Activated B cell treated with CpG ODN at 0.5 μM for 24 hours (primary cell): ENCODE measurements at regions of chr20 and their contacts with region 1.

Region 1: GRCh38 chr20:53738039-53738944 is 144.7 kb upstream of the ZNF217 start:
- DNase-seq: no peak
- ATAC-seq: no peak
- H3K4me3 Mint-ChIP-seq: peak overlapping the region; percentile 74
- H3K27ac Mint-ChIP-seq: peak overlapping the region; percentile 97
- H3K4me1 Mint-ChIP-seq: peaks cover 78% of the 10 kb centered on the region
- H3K27me3 Mint-ChIP-seq: no peaks in the 10 kb centered on the region
- CTCF ChIP-seq: no peak

Region 2: DNA sequence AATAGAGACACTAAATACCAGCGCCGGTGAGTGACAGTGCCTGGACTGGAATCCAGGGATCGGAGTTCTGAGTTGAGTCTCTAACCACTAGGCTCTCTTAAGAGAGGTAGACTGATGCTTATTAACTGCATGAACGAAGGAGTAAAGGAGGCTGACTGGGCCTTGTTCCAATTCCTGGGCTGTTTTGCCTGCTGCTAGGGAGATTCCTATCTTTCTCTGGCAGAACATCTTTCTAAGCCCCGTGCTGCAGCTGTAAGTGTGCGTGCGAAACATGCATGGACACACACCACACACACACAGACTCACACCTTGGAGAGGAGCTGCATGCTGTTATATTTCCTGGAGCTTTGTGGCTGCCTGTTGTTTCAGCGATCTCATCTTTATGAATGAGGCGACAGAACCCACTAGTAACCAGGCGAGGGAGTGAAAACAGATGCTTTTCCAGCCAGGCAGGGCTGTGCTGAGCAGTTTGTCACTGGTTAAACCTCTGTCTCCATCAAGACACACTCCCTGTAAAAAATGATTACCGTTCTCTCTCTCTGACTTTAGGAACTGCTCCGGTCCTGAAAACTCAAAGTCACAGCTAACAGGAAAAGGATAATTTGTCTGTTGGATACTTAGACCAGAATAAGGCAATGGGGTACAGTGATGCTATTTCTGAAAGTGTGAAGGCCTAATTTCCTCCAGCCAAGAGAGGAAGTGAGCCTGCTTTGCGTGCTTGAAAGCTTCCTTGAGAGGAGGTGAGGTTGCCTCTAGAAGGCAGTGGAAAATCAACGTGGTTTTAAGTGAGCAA is 12.7 kb after region 1 on chr20:
- CTCF ChIA-PET with region 1: interaction called, 5 read pairs
- POLR2A ChIA-PET with region 1: interaction called, 20 read pairs
- intact Hi-C with region 1: loop called (anchors 1 kb)
- DNase-seq: no peak
- ATAC-seq: peak; percentile 87
- H3K4me3 Mint-ChIP-seq: peak overlapping the region; percentile 45
- H3K27ac Mint-ChIP-seq: peak overlapping the region; percentile 95
- H3K4me1 Mint-ChIP-seq: peaks cover 64% of the 10 kb centered on the region
- H3K27me3 Mint-ChIP-seq: no peaks in the 10 kb centered on the region
- CTCF ChIP-seq: no peak